ENCODE measurements at regions of chr6 and their contacts with region 1.

Region 1: GRCh38 chr6:24689964-24690363 is 23.1 kb downstream of the ACOT13 start:
- DNase-seq: no peak
- H3K4me3 Mint-ChIP-seq: no peak overlapping the region
- H3K27ac Mint-ChIP-seq: no peak overlapping the region
- H3K4me1 Mint-ChIP-seq: peaks cover 17% of the 10 kb centered on the region
- H3K27me3 Mint-ChIP-seq: no peaks in the 10 kb centered on the region
- CTCF ChIP-seq: no peak

Region 2: DNA sequence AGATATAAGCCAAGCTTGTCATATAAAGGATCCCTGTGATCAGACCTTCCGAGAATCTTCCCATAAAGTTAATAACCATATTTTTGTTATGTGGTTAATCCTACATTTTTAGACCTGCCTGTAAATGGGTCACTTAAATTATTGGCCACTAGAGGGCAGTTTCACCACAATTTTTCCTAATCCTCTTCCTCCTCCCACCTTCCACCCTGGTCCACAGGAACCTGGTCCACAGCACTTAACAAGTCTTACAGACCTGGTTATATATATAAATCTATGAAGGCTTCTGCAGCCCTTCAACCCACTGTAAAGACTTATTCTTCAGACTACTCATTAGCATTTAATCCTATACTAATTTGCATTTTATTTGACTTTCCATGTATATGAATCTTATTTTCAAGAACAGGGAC is 258.9 kb before region 1 on chr6:
- CTCF ChIA-PET with region 1: no interaction called
- intact Hi-C with region 1: loop called (anchors 2 kb)
- DNase-seq: peak; percentile 58
- H3K4me3 Mint-ChIP-seq: no peak overlapping the region
- H3K27ac Mint-ChIP-seq: no peak overlapping the region
- H3K4me1 Mint-ChIP-seq: peaks cover 9% of the 10 kb centered on the region
- H3K27me3 Mint-ChIP-seq: no peaks in the 10 kb centered on the region
- CTCF ChIP-seq: peak; percentile 93

Region 3: GRCh38 chr6:24766680-24767462 is 76.9 kb after region 1 on chr6:
- CTCF ChIA-PET with region 1: no interaction called
- intact Hi-C with region 1: loop called (anchors 1 kb)
- DNase-seq: no peak
- H3K4me3 Mint-ChIP-seq: no peak overlapping the region
- H3K27ac Mint-ChIP-seq: peak overlapping the region; percentile 17
- H3K4me1 Mint-ChIP-seq: peaks cover 25% of the 10 kb centered on the region
- H3K27me3 Mint-ChIP-seq: no peaks in the 10 kb centered on the region
- CTCF ChIP-seq: peak; percentile 67

Measured in Calu3 (cell line).